A549 (cell line): ENCODE measurements at regions of chr6 and their contacts with region 1.

Region 1: DNA sequence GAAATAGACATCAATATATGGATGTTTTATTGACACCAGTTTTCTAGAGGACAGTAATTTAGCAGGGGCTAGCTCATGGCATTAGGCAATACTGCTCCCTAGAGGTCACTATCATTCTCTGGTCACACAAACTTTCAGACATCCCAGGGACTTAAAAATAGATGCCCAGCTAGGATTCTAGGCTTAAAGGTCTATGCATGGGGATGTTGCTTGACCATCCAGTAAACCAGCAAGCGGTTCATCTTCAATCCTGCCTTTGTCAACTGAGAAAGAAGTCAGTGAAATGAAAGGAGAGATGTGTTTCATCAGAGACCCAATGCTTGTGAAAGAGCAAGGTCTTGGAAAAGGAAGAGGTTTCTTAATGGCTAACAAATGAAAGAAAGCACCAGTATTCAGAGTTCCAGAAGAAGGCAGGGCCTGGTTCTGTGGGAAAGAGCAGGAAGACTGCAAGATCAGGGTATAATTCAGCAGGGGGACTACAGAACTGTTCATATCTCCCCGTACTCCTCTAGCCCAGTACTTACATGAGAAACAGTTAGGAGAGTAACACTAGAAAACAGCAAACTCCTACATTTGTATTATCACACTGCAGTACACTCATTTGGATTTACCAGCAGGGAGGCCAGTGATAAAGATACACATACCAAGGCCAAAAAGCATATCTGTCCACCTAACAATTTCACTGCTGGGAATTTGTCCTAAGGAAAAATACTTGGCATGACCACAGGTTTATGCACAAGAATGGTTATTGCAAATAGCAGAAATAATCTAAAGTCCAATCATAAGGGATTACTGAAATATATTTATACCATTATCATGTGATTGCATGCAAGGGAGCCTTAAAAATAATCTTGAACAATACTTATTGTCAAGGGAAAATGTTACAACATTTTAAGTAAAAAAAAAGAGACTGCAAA is 151.4 kb upstream of the LAMA2 start:
- DNase-seq: peak; percentile 8 to 41
- ATAC-seq: peak; percentile 71 to 79; a peak in 3 of 6 replicates
- H3K4me3 ChIP-seq: no peak overlapping the region
- H3K27ac ChIP-seq: no peak overlapping the region
- H3K4me1 ChIP-seq: no peaks in the 10 kb centered on the region
- CTCF ChIP-seq: peak; percentile 60
- EP300 ChIP-seq: no peak
- POLR2A ChIP-seq: no peak
- RAD21 ChIP-seq: peak; percentile 76 to 84

Region 2: GRCh38 chr6:127855542-127856159 is 875.9 kb before region 1 on chr6:
- CTCF ChIA-PET with region 1: interaction called, 14 read pairs
- POLR2A ChIA-PET with region 1: no interaction called
- DNase-seq: peak in 1 of 2 experiments; percentile 20
- ATAC-seq: peak; percentile 51 to 62; a peak in 1 of 6 replicates
- H3K4me3 ChIP-seq: no peak overlapping the region
- H3K27ac ChIP-seq: no peak overlapping the region
- H3K4me1 ChIP-seq: no peaks in the 10 kb centered on the region
- CTCF ChIP-seq: peak; percentile 53
- EP300 ChIP-seq: no peak
- POLR2A ChIP-seq: no peak
- RAD21 ChIP-seq: peak; percentile 71